Dendritic cell treated with granulocyte-macrophage colony-stimulating factor and Interleukin-4, amounts not matched to agents 40 ng/mL and 50 ng/mL, for 4 days (primary cell): ENCODE measurements at regions of chr7 and their contacts with region 1.

Region 1: DNA sequence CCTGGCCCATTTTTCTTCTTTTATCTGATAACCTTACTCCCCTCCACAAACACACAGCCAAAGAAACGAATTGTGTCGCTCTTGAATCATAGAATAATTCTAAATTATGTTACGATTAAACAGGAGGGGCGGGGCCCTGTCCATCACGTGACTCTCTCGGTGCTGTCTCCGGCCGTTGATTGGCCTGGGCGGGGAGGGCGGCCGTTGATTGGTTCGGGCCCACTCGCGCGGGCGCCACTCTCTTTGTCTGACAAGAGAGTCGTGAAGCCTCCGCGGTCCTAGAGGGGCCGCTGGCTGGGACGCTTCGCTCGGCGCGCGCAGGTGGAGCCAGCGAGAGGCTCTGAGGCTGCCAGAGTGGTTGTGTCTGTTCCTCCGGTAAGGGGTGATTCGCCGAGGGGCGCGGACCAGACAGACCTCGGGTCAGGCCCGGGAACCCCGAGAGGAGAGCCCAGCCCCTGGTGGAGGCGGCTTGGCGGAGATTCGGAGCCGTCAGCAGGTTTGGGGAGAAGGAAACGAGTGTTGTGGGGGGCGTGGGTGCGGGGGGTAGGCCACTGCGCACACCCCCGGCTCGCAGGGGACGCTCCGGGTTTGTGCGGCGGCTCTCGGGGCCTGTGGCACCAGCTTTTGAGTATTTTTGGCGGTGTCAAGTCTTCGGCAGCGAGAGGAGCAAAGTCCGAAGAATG is at the start of gene ZNF789:
- H3K4me3 Mint-ChIP-seq: peak within 1 kb of the TSS; percentile 99
- H3K27ac Mint-ChIP-seq: peak within 1 kb of the TSS; percentile 91
- H3K4me1 Mint-ChIP-seq: peaks cover 32% of the 10 kb centered on the region
- H3K27me3 Mint-ChIP-seq: peaks cover 23% of the 10 kb centered on the region

Region 2: DNA sequence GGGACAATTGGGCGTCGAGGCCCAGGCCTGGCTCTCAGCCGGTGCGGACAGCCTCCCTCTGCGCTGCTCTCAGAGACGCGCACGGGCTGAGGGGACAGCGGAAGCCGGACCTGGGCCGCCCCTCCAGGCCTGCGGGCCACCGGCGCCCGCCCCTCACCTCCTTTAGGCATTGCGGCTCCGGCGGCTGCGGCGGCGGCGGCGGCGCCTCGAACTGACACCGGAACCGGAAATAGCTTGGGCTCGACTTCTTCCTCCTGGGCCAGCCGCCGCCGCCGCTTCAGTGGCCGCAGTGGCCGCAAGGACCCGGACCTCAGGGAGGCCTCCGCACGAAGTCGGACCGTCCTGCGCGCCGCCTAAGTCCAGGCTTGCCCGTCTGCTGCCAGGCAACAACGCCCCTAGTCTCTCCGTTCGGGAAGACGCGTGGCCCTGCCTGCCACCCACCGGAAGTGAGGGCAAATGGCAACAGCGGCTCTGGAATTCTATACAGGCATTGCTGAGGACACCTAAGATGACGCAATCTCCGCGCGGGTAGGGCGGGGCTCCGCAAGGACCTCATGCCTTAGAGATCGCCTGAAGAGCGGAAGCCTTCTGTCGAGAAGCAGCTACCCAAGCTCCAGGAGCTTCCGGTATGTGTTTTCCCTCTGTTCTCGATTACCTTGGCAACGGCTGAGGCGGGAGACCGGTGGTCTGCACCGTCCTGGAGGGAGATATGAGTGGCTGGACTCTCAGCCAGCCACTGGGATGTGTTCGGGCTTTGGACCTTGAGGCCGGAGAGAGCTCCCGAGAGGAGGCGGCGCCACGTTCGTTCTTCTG is 64.1 kb before region 1 on chr7 and contains the starts of genes BUD31 and PDAP1:
- intact Hi-C with region 1: loop called (anchors 2 kb)
- H3K4me3 Mint-ChIP-seq: peak within 1 kb of the TSS; percentile 97
- H3K27ac Mint-ChIP-seq: peak within 1 kb of the TSS; percentile 90
- H3K4me1 Mint-ChIP-seq: peaks cover 42% of the 10 kb centered on the region
- H3K27me3 Mint-ChIP-seq: no peaks in the 10 kb centered on the region

Region 3: DNA sequence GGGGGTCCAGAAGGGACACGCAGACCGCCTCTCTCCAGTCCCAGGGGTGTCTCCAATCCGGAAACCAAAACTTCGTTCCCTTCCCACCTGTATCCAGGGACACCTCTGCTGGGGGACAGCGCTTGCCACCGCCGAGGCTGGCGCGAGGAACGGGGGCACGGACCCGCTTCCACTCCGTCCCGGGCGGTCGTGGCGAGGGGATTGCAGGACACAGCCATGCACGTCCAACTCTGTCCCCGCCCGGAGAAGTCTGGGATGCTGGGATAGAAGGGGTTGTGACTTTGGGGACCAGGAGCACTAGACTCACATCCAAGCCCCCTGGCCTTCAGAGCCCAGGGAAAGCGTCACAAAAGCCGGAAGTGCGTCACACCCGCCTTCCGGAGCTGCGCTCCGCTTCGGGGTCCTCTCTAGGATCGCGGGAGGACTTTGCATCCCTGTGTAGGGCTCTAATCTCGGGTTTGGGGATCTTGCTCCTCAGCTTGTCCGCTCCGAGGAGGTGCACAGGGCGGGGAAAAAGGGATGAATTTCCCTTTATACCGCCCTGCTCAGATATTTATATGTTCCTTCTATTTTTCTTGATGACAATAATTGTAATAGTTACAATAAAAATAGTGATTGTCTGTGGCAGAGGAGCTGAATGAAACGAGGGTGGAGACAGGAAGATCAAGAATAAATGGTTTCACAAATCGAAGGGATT is 79.2 kb after region 1 on chr7 and contains the start of gene FAM200A:
- intact Hi-C with region 1: loop called (anchors 10 kb)
- H3K4me3 Mint-ChIP-seq: peak within 1 kb of the TSS; percentile 86
- H3K27ac Mint-ChIP-seq: peak within 1 kb of the TSS; percentile 92
- H3K4me1 Mint-ChIP-seq: peaks cover 39% of the 10 kb centered on the region
- H3K27me3 Mint-ChIP-seq: no peaks in the 10 kb centered on the region

Region 4: DNA sequence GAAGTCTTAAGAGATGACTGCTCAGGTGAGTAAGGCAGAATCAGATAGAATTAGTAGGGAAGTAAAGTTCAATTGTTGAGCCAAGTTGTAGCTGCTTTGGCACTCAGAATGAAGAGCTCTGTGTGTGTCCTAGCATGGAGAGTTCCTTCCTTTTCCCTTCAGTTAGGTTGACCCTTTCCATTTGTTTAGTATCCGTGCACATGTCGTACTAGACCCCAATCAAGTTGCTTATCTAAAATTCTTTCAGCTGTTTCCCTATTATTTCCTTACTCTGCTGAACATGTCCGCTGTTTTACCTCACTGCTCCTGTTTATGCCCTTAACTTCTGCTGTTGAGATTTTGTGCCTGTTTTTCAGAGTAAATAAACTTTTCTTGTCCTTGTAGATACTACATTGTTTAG is 99.1 kb after region 1 on chr7:
- intact Hi-C with region 1: no loop called
- H3K4me3 Mint-ChIP-seq: no peak overlapping the region
- H3K27ac Mint-ChIP-seq: no peak overlapping the region
- H3K4me1 Mint-ChIP-seq: no peaks in the 10 kb centered on the region
- H3K27me3 Mint-ChIP-seq: no peaks in the 10 kb centered on the region